ENCODE measurements at regions of chr22 and their contacts with region 1.

Region 1: GRCh38 chr22:18077639-18078328 is at the start of gene PEX26:
- DNase-seq: no peak
- H3K4me3 ChIP-seq: peak within 1 kb of the TSS; percentile 90
- CTCF ChIP-seq: no peak

Region 2: GRCh38 chr22:17785185-17786184 is 292.3 kb before region 1 on chr22:
- CTCF ChIA-PET with region 1: interaction called, 10 read pairs
- POLR2A ChIA-PET with region 1: no interaction called
- DNase-seq: no peak
- H3K4me3 ChIP-seq: no peak overlapping the region
- CTCF ChIP-seq: peak; percentile 60

Region 3: GRCh38 chr22:17876306-17876831 is 201.4 kb before region 1 on chr22:
- CTCF ChIA-PET with region 1: interaction called, 33 read pairs
- POLR2A ChIA-PET with region 1: no interaction called
- DNase-seq: no peak
- H3K4me3 ChIP-seq: no peak overlapping the region
- CTCF ChIP-seq: no peak

Region 4: DNA sequence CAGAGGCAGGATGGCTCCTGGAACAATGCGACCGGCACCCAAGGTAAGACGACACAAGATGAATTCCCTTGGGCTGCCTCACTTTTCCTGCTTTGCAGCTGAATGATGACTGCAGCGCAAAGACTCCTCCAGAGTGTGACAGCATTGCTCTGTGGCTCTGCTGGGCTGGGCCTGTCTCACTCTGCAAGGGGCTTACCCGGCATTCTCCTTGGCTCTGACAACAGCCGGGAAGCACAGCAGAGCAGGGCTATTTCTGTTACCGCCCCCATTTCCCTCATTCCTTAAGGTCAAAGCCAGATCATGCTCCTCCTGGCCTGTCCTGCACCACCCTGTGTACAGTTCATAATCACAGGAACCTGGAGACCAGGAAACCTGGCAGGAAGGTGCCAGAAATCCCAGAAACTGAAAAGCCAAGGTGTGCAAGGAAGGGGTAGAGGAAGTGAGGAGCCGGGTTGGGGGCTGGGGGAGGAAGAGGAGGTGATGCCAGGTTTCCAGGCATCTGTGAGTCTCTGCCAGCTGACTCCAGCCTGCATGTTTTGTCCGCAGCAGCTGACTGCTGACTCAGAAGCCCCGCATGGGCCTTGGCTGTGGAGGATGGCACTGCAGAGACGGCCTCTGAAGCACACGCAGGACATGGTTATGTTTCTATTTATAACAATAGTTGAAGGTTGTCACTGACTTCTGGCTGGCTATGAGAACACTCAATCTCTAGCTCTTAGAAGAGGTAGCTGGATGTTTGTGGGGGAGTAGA is 167.0 kb before region 1 on chr22:
- CTCF ChIA-PET with region 1: interaction called, 84 read pairs
- POLR2A ChIA-PET with region 1: no interaction called
- DNase-seq: peak; percentile 70
- H3K4me3 ChIP-seq: peak overlapping the region; percentile 26
- CTCF ChIP-seq: peak; percentile 67

Region 5: DNA sequence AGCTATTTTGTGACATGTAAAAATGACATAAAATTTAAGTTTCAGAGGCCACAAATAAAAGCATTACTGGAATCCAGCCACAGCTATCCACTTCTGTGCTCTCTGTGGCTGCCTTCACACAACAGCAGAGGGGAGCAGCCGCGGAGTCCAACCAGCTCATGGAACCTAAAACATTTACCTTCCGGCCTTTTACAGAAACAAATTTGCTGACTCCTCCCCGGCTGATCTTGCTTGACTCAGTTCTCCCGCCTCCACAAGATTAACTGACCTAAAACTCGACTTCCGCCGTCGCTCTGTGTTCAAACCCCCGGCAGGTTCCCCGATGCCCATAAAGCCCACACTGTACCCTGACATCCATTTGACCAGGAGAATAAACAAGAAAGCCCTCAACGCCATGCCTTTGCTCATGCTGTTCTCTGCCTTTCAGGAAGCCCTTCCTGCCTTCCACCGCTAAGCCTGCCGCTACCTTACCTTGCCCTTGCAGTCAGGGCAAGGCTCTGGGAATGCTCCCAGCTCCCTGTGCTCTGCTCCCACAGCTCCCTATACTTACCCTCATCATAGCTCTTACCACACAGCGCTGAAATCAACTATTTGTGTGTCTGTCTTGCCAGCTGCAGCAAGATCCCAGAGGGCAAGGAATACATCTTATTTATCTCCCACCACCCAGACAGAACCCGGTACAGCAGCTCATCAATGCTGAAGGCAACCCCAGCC is 88.8 kb before region 1 on chr22:
- CTCF ChIA-PET with region 1: interaction called, 19 read pairs
- POLR2A ChIA-PET with region 1: no interaction called
- DNase-seq: no peak
- H3K4me3 ChIP-seq: no peak overlapping the region
- CTCF ChIP-seq: no peak

Region 6: GRCh38 chr22:18057568-18058209 is 20.1 kb before region 1 on chr22:
- CTCF ChIA-PET with region 1: interaction called, 20 read pairs
- POLR2A ChIA-PET with region 1: interaction called, 3 read pairs
- DNase-seq: peak; percentile 96
- H3K4me3 ChIP-seq: no peak overlapping the region
- CTCF ChIP-seq: no peak

Region 7: DNA sequence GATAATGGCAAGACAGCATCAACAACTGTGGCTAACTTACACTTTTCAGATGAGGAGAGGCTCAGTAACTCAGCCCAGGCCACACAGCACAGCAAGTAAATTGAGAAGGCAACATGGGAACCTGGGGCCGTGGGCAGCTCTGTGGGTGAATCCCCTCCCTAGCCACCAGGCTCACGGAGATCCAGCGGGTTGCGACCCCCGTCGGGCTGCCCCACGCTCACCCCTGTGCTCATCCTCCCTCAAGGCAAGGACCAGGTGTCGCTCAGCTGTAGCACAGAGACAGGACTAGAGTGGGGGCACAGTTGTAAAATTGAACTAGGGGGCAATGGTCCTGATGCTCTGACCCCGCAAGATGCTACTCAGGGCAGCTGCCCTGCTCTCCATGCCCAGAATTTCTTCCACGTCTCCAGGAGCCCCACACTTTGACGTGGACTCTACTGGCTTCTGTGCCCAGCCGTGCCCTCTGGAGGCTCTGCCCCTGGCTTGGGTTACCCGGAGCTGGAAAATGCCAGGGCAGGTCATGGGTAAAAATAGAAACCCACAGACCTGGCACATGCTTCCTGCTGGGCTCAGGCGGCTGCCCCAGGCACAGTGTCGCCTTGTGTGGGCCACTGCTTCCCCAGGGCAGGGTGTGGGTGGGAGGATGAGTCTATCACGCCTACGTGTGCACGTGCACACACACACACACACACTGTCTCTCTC is 41.8 kb after region 1 on chr22:
- CTCF ChIA-PET with region 1: no interaction called
- POLR2A ChIA-PET with region 1: no interaction called
- DNase-seq: no peak
- H3K4me3 ChIP-seq: no peak overlapping the region
- CTCF ChIP-seq: no peak

Region 8: GRCh38 chr22:18133452-18133851 is 55.7 kb after region 1 on chr22:
- CTCF ChIA-PET with region 1: no interaction called
- POLR2A ChIA-PET with region 1: no interaction called
- DNase-seq: no peak
- H3K4me3 ChIP-seq: no peak overlapping the region
- CTCF ChIP-seq: no peak

Measured in AG04449 (cell line).